Activated B cell treated with CpG ODN at 0.5 μM for 24 hours (primary cell): ENCODE measurements at regions of chr2 and their contacts with region 1.

Region 1: DNA sequence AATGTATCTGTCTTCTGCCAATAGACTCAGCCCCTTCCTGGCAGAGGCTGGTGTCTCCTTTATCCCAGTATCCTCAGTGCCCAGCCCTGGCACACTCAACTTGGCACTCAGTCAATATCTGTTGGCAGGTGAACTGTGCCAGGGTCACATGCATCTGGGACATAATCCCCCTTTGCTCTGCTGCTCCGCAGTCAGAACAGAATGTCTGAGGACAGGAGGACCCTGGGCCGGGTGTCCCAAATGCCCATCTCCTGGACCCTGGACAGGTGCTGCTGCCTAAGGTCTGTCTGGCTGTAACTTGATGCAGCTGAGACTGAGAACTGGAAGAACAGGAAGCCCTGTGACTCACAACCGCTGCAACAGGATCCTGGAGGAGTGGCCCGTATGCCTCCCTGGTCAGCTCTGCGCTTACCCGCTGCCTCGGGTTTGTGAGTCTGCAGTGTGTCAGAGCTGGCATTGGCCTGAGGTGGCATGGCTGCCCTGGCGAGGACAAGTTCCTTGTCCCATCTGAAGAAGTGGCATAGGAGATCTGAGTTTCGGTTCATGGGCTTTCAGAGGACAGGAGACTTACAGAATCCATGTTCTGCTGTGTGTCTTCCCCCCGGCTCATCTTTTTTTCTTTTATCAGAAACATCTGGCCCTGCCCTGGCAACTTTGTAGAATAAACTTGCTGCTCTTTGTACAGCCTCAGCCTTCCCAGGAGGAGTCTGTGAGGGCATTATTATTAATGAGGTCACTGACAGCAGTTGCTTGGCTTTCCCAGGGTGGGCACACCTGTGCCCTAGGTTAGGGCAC is 11.5 kb downstream of the HK2 start:
- DNase-seq: no peak
- ATAC-seq: no peak
- H3K4me3 Mint-ChIP-seq: no peak overlapping the region
- H3K27ac Mint-ChIP-seq: peak overlapping the region; percentile 59
- H3K4me1 Mint-ChIP-seq: peaks cover 70% of the 10 kb centered on the region
- H3K27me3 Mint-ChIP-seq: no peaks in the 10 kb centered on the region
- CTCF ChIP-seq: no peak

Region 2: DNA sequence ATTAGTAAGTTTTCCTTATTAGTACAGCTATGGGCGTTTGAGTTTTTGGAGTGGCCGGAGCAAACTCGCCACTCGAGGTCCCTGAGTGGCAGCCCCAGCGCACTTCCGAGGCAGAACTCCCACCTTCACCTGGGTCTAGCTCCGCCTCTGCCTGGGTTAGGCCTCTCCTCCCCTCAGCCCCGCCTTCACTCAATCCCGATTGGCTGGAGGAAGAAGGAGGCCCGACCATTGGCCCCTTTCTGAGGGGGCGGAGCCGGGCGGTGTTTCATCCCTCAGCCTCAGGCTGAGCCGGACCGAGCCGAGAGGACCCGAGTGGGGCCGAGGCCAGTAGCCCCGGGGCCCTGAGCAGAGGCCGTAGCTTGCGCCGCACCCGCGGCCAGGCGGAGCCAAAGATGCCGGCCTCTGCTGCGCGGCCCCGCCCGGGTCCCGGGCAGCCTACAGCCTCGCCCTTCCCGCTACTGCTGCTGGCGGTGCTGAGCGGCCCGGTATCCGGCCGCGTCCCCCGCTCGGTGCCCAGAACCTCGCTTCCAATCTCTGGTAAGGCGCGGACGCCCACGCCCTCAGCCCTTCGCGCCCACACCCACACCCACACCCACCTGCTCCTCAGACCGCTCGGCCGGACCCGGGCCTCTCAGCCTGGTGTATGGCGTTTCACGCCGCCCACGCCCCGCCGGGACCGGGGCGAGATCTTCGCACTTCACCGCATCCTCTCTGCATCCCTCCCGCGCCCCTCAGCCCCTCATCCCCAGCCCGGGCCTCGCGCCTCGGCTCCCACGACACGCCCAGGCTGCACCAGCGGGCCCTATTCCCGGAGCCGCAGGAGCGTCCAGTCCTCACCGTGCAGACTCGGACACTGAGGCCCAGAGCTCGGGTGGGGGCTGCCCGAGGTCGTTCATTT is 191.2 kb before region 1 on chr2 and contains the start of gene SEMA4F:
- CTCF ChIA-PET with region 1: no interaction called
- POLR2A ChIA-PET with region 1: no interaction called
- intact Hi-C with region 1: loop called (anchors 5 kb)
- DNase-seq: peak; percentile 92
- ATAC-seq: peak; percentile 99
- H3K4me3 Mint-ChIP-seq: peak within 1 kb of the TSS; percentile 91
- H3K27ac Mint-ChIP-seq: peak within 1 kb of the TSS; percentile 82
- H3K4me1 Mint-ChIP-seq: peaks cover 16% of the 10 kb centered on the region
- H3K27me3 Mint-ChIP-seq: peaks cover 9% of the 10 kb centered on the region
- CTCF ChIP-seq: no peak
- total RNA-seq, gene SEMA4F: 10.2 and 11.6 TPM in 2 replicates

Region 3: DNA sequence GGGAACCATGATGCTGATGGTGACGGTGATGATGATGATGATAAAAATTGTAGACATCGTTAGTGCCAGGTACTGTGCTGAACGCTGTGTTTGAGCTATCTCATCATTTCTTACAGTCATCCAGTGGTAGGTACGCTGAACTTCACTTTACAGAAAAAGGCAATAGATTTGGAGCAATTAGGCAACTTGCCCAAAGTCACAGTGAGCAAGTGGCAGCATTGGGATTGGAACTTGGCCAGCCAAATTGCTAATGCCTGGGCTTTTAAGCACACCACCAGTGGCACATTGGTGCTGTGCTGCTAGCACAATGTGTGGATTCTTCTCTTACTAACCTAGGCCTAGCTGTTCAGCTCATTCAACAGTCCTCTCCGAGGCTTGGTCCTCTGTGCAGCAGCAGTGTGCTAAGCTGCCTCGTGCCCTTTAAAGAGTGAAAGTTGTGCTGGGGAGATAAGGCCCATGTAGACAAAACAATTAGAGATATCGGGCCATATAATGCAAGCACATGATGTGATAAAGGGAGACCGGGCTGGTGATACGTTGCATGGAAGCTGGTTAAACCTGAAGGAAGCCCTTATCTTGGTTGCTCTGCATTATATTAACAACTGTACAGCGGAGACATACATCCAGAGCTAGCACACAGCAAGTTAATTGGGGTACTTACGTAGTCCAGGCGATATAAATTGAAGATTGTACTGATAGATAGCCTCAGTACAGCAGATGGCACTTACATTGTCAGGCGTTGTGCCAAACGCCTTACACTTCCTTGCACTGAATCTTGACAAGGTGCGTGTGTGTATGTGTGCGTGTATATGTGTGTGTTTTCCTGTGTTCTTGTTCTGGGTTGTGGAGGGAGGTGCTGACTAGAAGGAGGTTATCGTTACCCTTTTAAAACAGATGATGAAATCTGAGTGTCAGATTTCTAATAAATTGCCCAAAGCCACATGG is 16.9 kb after region 1 on chr2:
- CTCF ChIA-PET with region 1: no interaction called
- POLR2A ChIA-PET with region 1: interaction called, 3 read pairs
- intact Hi-C with region 1: loop called (anchors 2 kb)
- DNase-seq: no peak
- ATAC-seq: no peak
- H3K4me3 Mint-ChIP-seq: no peak overlapping the region
- H3K27ac Mint-ChIP-seq: no peak overlapping the region
- H3K4me1 Mint-ChIP-seq: peaks cover 31% of the 10 kb centered on the region
- H3K27me3 Mint-ChIP-seq: no peaks in the 10 kb centered on the region
- CTCF ChIP-seq: no peak